SK-N-SH (cell line): ENCODE measurements at regions of chr6 and their contacts with region 1.

Region 1: DNA sequence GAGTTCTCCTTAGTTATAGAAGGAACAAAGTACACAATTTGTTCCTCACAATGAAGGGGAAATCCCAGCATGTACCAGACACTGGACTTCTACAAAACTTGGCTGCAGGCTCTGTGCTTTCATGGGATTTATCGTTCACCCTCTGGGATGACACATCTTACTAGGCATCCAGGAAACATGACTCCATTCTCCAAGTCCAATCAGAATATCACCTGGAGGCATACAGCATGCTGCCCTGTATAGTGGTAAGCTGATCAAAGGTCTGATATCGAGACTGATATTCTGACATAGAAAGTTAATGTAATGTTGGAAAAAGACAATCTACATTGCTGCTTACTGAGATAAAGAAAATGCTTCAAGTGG is 6.7 kb downstream of the RWDD2A start:
- DNase-seq: no peak
- H3K4me3 ChIP-seq: no peak overlapping the region
- H3K27ac ChIP-seq: peak overlapping the region in 1 of 2 experiments; percentile 57; a peak in 2 of 4 replicates
- H3K4me1 ChIP-seq: peaks cover 3 to 20% of the 10 kb centered on the region in 2 experiments; a peak in 2 of 4 replicates
- H3K27me3 ChIP-seq: no peaks in the 10 kb centered on the region
- CTCF ChIP-seq: no peak
- EP300 ChIP-seq: no peak
- RAD21 ChIP-seq: no peak

Region 2: GRCh38 chr6:83215131-83216047 is 15.5 kb after region 1 on chr6:
- CTCF ChIA-PET with region 1: interaction called, 15 read pairs
- POLR2A ChIA-PET with region 1: no interaction called
- DNase-seq: peak; percentile 51
- H3K4me3 ChIP-seq: peak overlapping the region in 1 of 2 experiments; percentile 16; a peak in 1 of 4 replicates
- H3K27ac ChIP-seq: peak overlapping the region; percentile 64 to 72
- H3K4me1 ChIP-seq: peaks cover 6 to 9% of the 10 kb centered on the region in 2 experiments; a peak in 3 of 4 replicates
- H3K27me3 ChIP-seq: no peaks in the 10 kb centered on the region
- CTCF ChIP-seq: peak; percentile 95
- EP300 ChIP-seq: no peak
- RAD21 ChIP-seq: peak; percentile 88